ENCODE measurements at regions of chr11 and their contacts with region 1.

Region 1: GRCh38 chr11:72598906-72599305 is 75.3 kb downstream of the PDE2A start:
- DNase-seq: peak; percentile 51 to 70
- ATAC-seq: peak; percentile 85 to 92 (median 88)
- H3K4me3 ChIP-seq: no peak overlapping the region
- H3K27ac ChIP-seq: no peak overlapping the region
- H3K4me1 ChIP-seq: no peaks in the 10 kb centered on the region
- H3K27me3 ChIP-seq: no peaks in the 10 kb centered on the region
- CTCF ChIP-seq: peak; percentile 69

Region 2: GRCh38 chr11:71103266-71103665 is 1495.6 kb before region 1 on chr11:
- intact Hi-C with region 1: no loop called
- DNase-seq: no peak
- ATAC-seq: no peak
- H3K4me3 ChIP-seq: no peak overlapping the region
- H3K27ac ChIP-seq: no peak overlapping the region
- H3K4me1 ChIP-seq: no peaks in the 10 kb centered on the region
- H3K27me3 ChIP-seq: no peaks in the 10 kb centered on the region
- CTCF ChIP-seq: no peak

Region 3: GRCh38 chr11:72642884-72643511 is 44.1 kb after region 1 on chr11:
- intact Hi-C with region 1: loop called (anchors 1 to 2 kb)
- DNase-seq: peak; percentile 68 to 80
- ATAC-seq: peak; percentile 79 to 91 (median 87)
- H3K4me3 ChIP-seq: peak overlapping the region; percentile 72
- H3K27ac ChIP-seq: peak overlapping the region; percentile 46
- H3K4me1 ChIP-seq: peaks cover 7% of the 10 kb centered on the region
- H3K27me3 ChIP-seq: peaks cover 0 to 17% (median 0%) of the 10 kb centered on the region in 3 donors
- CTCF ChIP-seq: peak; percentile 98

Measured in psoas muscle (tissue), 8 donors.